ENCODE measurements at regions of chr11 and their contacts with region 1.

Region 1: DNA sequence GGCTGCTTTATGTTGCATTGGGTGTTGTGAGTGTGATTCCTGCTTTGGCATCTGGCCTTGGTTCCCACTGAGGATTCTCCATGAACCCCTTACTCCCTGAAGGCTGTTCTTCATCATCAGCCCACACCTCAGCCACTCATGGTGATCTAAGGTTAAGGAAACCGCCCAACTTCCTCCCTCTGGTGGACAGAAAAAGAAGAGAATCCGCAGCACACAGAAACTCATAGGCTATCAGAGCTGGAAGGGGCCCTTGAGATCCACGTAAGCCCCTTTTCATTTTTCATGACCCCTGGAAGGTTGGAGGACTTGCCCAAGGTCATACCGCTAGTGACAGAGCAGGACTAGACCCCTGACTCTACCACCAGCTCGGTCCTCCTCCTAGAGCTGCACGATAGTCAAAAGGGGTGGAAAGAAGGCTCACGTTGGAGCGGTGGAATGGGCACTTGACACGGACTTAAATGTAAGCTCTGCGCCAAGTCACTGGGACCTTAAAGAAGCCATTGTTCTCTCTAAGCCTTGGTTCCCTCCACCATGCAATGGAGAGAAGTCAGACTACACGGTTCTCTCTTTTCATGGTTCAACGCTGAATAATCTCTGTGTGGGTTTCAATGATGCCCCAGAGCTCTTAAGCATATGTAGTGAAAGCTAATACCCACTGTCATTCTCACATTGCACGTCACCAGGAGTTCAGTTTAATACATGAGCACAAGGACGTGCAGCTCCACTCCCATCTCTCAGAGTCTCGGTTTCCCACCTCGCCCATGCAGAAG is 83.6 kb upstream of the CRTAM start:
- H3K4me3 Mint-ChIP-seq: peak overlapping the region; percentile 6
- H3K27ac Mint-ChIP-seq: peak overlapping the region; percentile 80
- H3K4me1 Mint-ChIP-seq: peaks cover 74% of the 10 kb centered on the region
- H3K27me3 Mint-ChIP-seq: no peaks in the 10 kb centered on the region

Region 2: DNA sequence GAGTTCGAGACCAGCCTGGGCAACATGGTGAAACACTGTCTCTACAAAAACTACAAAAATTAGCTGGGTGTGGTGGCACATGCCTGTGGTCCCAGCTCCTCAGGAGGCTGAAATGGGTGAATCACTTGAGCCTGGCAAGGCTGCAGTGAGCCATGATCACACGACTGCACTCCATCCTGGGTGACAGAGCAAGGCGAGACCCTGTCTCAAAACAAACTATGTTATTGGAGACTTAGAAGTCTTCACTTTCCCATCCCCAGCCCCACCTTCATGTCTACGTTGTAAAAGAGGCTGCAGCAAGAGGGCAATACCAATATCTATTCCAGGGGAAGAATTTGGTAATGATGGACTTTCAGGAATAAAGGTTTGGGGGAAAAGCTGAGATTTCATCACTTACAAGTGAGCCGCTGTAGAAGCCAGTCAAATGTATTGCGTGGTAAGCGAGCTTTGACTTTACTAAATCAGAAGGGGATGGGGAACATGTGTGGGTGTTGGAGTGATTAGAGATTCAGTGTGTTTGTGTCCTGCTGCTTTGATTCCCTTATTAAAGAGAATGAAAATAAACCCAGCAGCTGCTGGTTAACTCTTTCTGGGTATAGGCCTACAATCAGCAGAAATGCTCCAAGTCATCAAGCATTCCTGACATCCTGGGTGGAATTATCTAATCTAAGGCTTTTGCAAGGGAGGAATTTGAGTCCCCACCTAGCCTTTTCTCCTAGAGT is 45.5 kb before region 1 on chr11:
- intact Hi-C with region 1: loop called (anchors 5 kb)
- H3K4me3 Mint-ChIP-seq: no peak overlapping the region
- H3K27ac Mint-ChIP-seq: peak overlapping the region; percentile 84
- H3K4me1 Mint-ChIP-seq: peaks cover 67% of the 10 kb centered on the region
- H3K27me3 Mint-ChIP-seq: no peaks in the 10 kb centered on the region

Region 3: DNA sequence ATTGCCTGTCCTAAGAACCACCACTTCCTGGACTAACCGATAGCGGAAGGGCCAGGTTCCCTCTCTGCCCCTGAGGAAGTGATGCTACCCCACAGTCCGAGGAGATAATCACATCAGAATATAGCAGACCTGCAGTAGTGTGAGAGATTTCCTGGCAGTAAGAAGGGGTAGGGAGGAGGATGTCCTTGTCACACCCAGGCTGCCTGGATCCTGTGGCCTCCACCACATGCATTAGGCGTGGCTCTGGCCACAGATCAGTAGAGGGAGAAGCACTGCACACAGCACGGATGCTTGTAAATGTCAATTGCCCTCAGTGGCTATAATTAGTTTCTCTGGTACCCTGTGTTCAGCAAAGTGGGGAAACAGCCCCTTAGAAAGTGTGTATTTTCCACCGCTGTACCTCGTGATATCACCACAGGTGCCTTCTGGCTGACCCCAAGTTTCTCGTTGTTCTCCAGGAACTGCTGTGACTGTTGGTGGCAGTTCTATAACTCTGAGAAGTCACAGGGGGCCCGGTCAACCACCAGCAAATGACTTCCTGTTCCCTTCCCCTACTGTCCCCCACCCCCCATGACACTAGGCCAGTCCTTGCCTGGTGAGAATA is 37.4 kb before region 1 on chr11:
- intact Hi-C with region 1: loop called (anchors 5 kb)
- H3K4me3 Mint-ChIP-seq: no peak overlapping the region
- H3K27ac Mint-ChIP-seq: peak overlapping the region; percentile 60
- H3K4me1 Mint-ChIP-seq: peaks cover 64% of the 10 kb centered on the region
- H3K27me3 Mint-ChIP-seq: no peaks in the 10 kb centered on the region